ENCODE measurements at regions of chr17 and their contacts with region 1.

Region 1: GRCh38 chr17:63571763-63572271 is 21.5 kb downstream of the DCAF7 start:
- DNase-seq: no peak
- H3K4me3 ChIP-seq: no peak overlapping the region
- H3K4me3 Mint-ChIP-seq: no peak overlapping the region
- H3K27ac Mint-ChIP-seq: no peak overlapping the region
- H3K4me1 ChIP-seq: no peaks in the 10 kb centered on the region
- H3K4me1 Mint-ChIP-seq: no peaks in the 10 kb centered on the region
- H3K27me3 ChIP-seq: no peaks in the 10 kb centered on the region
- H3K27me3 Mint-ChIP-seq: no peaks in the 10 kb centered on the region
- CTCF ChIP-seq: no peak

Region 2: DNA sequence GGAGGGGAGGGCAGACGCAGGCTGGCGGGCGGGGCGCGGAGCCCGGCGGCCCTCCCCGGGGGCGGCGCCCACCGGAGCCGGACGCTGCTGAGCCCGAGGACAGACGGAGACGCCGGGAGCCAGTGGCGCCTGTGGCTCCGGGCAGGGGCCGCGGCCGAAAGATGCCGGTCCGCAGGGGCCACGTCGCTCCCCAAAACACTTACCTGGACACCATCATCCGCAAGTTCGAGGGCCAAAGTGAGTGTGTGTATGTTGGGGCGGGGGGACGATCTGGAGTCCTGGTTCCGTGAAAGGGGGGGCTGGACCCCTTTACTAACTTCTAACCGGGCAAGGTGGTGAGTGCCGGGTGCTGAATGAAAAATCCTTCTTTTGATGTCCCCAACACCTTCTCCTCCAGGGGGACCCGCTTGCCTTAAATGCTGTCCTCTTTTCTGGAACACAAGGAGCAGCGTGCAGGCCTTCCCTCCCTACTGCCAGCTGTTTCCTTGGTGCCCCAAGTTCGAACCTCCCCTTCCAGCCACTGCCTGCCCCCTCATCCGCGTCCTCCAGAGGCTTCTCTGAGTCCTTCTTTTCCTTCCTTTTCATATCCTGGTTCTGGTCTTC is 48.5 kb before region 1 on chr17 and contains the start of gene KCNH6:
- CTCF ChIA-PET with region 1: no interaction called
- POLR2A ChIA-PET with region 1: no interaction called
- intact Hi-C with region 1: loop called (anchors 2 kb)
- DNase-seq: no peak
- H3K4me3 ChIP-seq: peak within 1 kb of the TSS; percentile 35
- H3K4me3 Mint-ChIP-seq: peak within 1 kb of the TSS; percentile 57
- H3K27ac Mint-ChIP-seq: no peak within 1 kb of the TSS
- H3K4me1 ChIP-seq: 0 out of 2 replicates have a peak, but pooled peaks cover 4% of the 10 kb centered on the region
- H3K4me1 Mint-ChIP-seq: peaks cover 8% of the 10 kb centered on the region
- H3K27me3 ChIP-seq: no peaks in the 10 kb centered on the region
- H3K27me3 Mint-ChIP-seq: peaks cover 8% of the 10 kb centered on the region
- CTCF ChIP-seq: no peak
- total RNA-seq, gene KCNH6: not detected in 2 replicates

Region 3: GRCh38 chr17:63558448-63558847 is 13.4 kb before region 1 on chr17:
- CTCF ChIA-PET with region 1: no interaction called
- POLR2A ChIA-PET with region 1: no interaction called
- intact Hi-C with region 1: no loop called
- DNase-seq: no peak
- H3K4me3 ChIP-seq: no peak overlapping the region
- H3K4me3 Mint-ChIP-seq: no peak overlapping the region
- H3K27ac Mint-ChIP-seq: no peak overlapping the region
- H3K4me1 ChIP-seq: no peaks in the 10 kb centered on the region
- H3K4me1 Mint-ChIP-seq: no peaks in the 10 kb centered on the region
- H3K27me3 ChIP-seq: no peaks in the 10 kb centered on the region
- H3K27me3 Mint-ChIP-seq: no peaks in the 10 kb centered on the region
- CTCF ChIP-seq: no peak

Region 4: GRCh38 chr17:63722403-63722802 is 150.6 kb after region 1 on chr17:
- CTCF ChIA-PET with region 1: no interaction called
- POLR2A ChIA-PET with region 1: no interaction called
- intact Hi-C with region 1: no loop called
- DNase-seq: no peak
- H3K4me3 ChIP-seq: no peak overlapping the region
- H3K4me3 Mint-ChIP-seq: no peak overlapping the region
- H3K27ac Mint-ChIP-seq: no peak overlapping the region
- H3K4me1 ChIP-seq: no peaks in the 10 kb centered on the region
- H3K4me1 Mint-ChIP-seq: no peaks in the 10 kb centered on the region
- H3K27me3 ChIP-seq: no peaks in the 10 kb centered on the region
- H3K27me3 Mint-ChIP-seq: no peaks in the 10 kb centered on the region
- CTCF ChIP-seq: no peak